WTC11 (cell line): ENCODE measurements at regions of chr14 and their contacts with region 1.

Region 1: DNA sequence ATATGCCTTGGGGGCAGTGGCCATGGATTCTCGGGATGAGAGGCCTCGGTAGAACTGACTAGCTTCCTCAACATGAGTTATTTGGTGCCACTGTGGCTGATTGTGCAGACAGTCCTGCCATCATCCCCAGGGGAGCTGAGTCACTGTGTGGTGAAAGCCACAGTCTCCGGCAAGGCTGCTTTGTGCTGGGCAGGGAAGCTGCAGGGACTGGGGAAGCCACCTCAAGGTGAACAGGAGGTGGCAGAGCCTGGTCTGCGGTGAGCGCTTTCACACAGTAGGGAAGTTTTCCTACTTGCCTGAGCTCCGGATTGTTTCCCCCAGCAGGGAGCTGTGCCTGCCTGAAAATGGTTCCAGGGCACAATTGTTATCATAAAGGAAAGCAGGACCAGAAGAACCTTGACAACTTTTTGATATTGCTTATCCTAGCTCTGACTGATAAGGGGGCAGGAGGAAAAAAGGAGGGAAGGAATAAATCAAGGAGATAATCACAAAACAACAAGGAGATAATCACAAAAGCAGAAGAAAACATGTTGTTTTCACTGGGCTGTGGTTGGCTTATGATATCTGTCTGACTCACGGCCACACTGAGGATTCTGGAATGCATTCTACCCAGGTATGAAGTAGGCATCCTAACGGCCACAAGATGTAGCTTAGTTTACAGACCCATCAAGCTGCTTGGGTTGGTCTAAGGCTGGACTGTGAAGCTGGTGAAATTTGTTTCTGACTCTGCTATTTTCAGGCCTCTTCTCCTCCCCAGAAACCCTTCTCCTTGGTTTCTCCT is 32.2 kb upstream of the GNG2 start:
- DNase-seq: no peak
- ATAC-seq: peak; percentile 77
- H3K4me3 Mint-ChIP-seq: no peak overlapping the region
- H3K27ac Mint-ChIP-seq: no peak overlapping the region
- H3K4me1 Mint-ChIP-seq: no peaks in the 10 kb centered on the region; the same call in 1 of the 2 replicates
- H3K27me3 Mint-ChIP-seq: no peaks in the 10 kb centered on the region
- CTCF ChIP-seq: no peak

Region 2: DNA sequence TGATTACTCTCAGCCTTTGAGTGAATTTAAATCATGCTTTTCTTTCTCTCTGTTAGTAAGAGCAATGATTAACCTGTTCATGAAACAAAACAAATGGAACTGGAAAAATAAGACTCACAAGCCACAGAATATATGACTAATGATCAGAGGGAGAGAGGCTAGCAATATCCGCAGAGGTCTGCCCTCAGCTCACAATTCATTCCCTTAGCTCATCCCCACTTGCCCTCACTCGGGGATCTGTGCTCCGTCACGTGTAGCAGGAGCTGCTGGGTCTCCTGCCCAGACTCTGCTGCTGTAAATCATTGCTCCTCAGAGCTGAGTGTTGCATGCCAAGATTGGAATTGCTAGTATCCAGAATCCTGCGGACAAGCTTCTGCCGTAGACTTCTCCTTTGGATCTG is 20.9 kb before region 1 on chr14:
- CTCF ChIA-PET with region 1: no interaction called
- POLR2A ChIA-PET with region 1: no interaction called
- DNase-seq: no peak
- ATAC-seq: no peak
- H3K4me3 Mint-ChIP-seq: no peak overlapping the region
- H3K27ac Mint-ChIP-seq: no peak overlapping the region
- H3K4me1 Mint-ChIP-seq: no peaks in the 10 kb centered on the region
- H3K27me3 Mint-ChIP-seq: peaks cover 7% of the 10 kb centered on the region
- CTCF ChIP-seq: no peak

Region 3: GRCh38 chr14:51979088-51979709 is 151.0 kb after region 1 on chr14:
- CTCF ChIA-PET with region 1: interaction called, 12 read pairs
- POLR2A ChIA-PET with region 1: no interaction called
- DNase-seq: peak; percentile 87
- ATAC-seq: peak; percentile 90
- H3K4me3 Mint-ChIP-seq: no peak overlapping the region
- H3K27ac Mint-ChIP-seq: no peak overlapping the region
- H3K4me1 Mint-ChIP-seq: peaks cover 7% of the 10 kb centered on the region
- H3K27me3 Mint-ChIP-seq: peaks cover 7% of the 10 kb centered on the region
- CTCF ChIP-seq: peak; percentile 95